ENCODE measurements at regions of chr18 and their contacts with region 1.

Region 1: DNA sequence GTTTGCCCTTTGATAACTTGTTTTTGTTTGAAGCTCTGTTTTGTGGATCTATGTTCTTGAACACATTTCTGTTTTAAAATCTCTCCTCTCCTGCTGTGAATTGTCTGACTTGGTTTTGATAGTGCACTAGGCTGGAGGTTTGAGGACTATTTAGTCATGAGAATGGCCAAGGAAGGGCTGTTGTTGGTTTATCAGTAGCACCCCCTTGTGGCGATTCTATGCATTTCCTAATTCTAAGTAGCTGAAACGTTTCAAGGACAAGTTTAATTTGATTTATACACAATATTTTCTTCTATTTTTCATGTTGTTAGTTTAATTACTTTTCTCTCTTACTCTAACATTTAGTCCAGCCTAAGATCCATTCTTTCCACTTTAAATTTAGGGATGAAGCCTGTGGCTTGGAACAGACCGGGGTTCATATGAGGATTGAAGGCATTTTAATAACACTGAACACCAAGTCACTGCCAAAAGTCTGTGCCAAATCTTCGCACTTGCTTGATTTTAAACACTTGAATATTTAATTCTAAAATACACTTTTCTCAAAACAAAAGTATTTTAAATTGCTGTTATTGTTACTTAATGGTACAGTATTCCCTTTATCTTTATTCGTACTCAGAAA is 166.0 kb downstream of the SOCS6 start:
- DNase-seq: peak; percentile 67
- H3K4me3 ChIP-seq: no peak overlapping the region
- H3K27ac ChIP-seq: no peak overlapping the region
- H3K4me1 ChIP-seq: no peaks in the 10 kb centered on the region
- H3K27me3 ChIP-seq: no peaks in the 10 kb centered on the region
- CTCF ChIP-seq: peak; percentile 61 to 76
- POLR2A ChIP-seq: no peak

Region 2: GRCh38 chr18:68847219-68847837 is 1607.5 kb before region 1 on chr18:
- CTCF ChIA-PET with region 1: interaction called, 8 read pairs
- POLR2A ChIA-PET with region 1: no interaction called
- dilution Hi-C with region 1: no loop called
- intact Hi-C with region 1: loop called (anchors 5 kb)
- DNase-seq: peak; percentile 64
- H3K4me3 ChIP-seq: no peak overlapping the region
- H3K27ac ChIP-seq: no peak overlapping the region
- H3K4me1 ChIP-seq: no peaks in the 10 kb centered on the region
- H3K27me3 ChIP-seq: no peaks in the 10 kb centered on the region
- CTCF ChIP-seq: peak; percentile 33 to 45
- POLR2A ChIP-seq: no peak

Region 3: GRCh38 chr18:70165936-70166335 is 288.9 kb before region 1 on chr18:
- CTCF ChIA-PET with region 1: interaction called, 70 read pairs
- POLR2A ChIA-PET with region 1: no interaction called
- dilution Hi-C with region 1: no loop called
- intact Hi-C with region 1: no loop called
- DNase-seq: peak; percentile 18
- H3K4me3 ChIP-seq: no peak overlapping the region
- H3K27ac ChIP-seq: no peak overlapping the region
- H3K4me1 ChIP-seq: no peaks in the 10 kb centered on the region
- H3K27me3 ChIP-seq: no peaks in the 10 kb centered on the region
- CTCF ChIP-seq: no peak
- POLR2A ChIP-seq: no peak

Region 4: DNA sequence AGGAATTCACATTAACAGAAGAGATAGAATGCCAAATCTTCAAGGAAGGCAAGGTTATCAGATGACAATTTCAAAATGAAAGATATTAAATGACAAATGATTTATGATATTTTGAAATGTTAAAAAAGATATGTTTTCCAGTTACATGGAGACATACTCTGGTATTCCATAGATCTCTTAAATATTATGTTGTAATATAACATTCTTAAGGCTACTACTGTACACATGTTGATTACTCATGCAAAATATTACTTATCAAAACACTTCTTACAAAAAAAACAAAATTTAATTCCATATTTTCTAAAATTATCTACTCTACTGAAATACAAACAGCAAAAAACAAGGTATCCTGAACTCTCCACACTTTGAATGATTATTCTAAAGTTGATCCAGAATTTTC is 272.3 kb before region 1 on chr18:
- CTCF ChIA-PET with region 1: interaction called, 13 read pairs
- POLR2A ChIA-PET with region 1: no interaction called
- dilution Hi-C with region 1: no loop called
- intact Hi-C with region 1: no loop called
- DNase-seq: no peak
- H3K4me3 ChIP-seq: no peak overlapping the region
- H3K27ac ChIP-seq: peak overlapping the region; percentile 42
- H3K4me1 ChIP-seq: peaks cover 19% of the 10 kb centered on the region
- H3K27me3 ChIP-seq: no peaks in the 10 kb centered on the region
- CTCF ChIP-seq: no peak
- POLR2A ChIP-seq: no peak

Region 5: DNA sequence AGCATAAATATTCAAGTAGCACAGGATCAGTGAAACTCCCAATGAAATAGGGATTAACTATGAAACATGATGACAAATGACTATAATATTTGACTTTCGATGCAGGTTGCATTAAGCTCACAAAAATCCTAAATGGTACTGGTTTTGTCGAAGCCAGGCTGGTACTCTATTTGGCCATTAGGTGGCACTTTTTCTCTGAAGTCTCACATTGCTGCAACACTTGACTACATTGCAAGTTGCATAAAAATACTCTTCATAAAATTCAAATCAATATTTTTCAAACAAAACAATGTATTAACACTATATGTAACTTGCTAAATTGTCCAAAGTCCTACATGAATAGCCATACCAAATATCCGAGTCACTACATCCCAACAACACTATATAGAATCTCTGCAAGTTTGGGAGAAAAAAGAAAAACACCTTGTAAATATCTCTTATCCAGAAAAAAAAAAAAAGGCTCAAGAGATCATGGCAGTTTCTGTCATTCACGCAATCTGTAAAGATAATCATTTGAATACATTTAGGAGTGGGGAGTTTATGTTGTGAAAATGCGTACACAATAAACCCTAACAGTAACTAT is 258.9 kb before region 1 on chr18:
- CTCF ChIA-PET with region 1: interaction called, 75 read pairs
- POLR2A ChIA-PET with region 1: no interaction called
- dilution Hi-C with region 1: no loop called
- intact Hi-C with region 1: loop called (anchors 1 kb)
- DNase-seq: peak; percentile 57
- H3K4me3 ChIP-seq: no peak overlapping the region
- H3K27ac ChIP-seq: no peak overlapping the region
- H3K4me1 ChIP-seq: no peaks in the 10 kb centered on the region
- H3K27me3 ChIP-seq: no peaks in the 10 kb centered on the region
- CTCF ChIP-seq: peak; percentile 62 to 64
- POLR2A ChIP-seq: no peak

Measured in endothelial cell of umbilical vein (primary cell).